ENCODE measurements at regions of chr13 and their contacts with region 1.

Region 1: GRCh38 chr13:110116072-110116487 is 190.9 kb downstream of the COL4A1 start:
- DNase-seq: peak; percentile 60
- H3K4me3 ChIP-seq: no peak overlapping the region
- H3K27ac ChIP-seq: no peak overlapping the region
- H3K4me1 ChIP-seq: peaks cover 25% of the 10 kb centered on the region
- H3K27me3 ChIP-seq: no peaks in the 10 kb centered on the region

Region 2: GRCh38 chr13:109145631-109146030 is 970.4 kb before region 1 on chr13:
- in situ Hi-C with region 1: loop called (anchors 10 kb)
- DNase-seq: peak; percentile 86
- H3K4me3 ChIP-seq: no peak overlapping the region
- H3K27ac ChIP-seq: no peak overlapping the region
- H3K4me1 ChIP-seq: peaks cover 26% of the 10 kb centered on the region
- H3K27me3 ChIP-seq: peaks cover 17% of the 10 kb centered on the region; the same call in 1 of the 2 replicates

Region 3: GRCh38 chr13:109275852-109276251 is 840.2 kb before region 1 on chr13:
- in situ Hi-C with region 1: loop called (anchors 25 kb)
- DNase-seq: peak; percentile 33
- H3K4me3 ChIP-seq: no peak overlapping the region
- H3K27ac ChIP-seq: no peak overlapping the region
- H3K4me1 ChIP-seq: peaks cover 42% of the 10 kb centered on the region
- H3K27me3 ChIP-seq: no peaks in the 10 kb centered on the region

Measured in GM23248 (cell line).